Right ventricle myocardium superior (tissue), 1 donor: ENCODE measurements at regions of chrX and their contacts with region 1.

Region 1: GRCh38 chrX:24259544-24260240 is 54.2 kb downstream of the SUPT20HL2 start:
- DNase-seq: no peak
- ATAC-seq: no peak

Region 2: DNA sequence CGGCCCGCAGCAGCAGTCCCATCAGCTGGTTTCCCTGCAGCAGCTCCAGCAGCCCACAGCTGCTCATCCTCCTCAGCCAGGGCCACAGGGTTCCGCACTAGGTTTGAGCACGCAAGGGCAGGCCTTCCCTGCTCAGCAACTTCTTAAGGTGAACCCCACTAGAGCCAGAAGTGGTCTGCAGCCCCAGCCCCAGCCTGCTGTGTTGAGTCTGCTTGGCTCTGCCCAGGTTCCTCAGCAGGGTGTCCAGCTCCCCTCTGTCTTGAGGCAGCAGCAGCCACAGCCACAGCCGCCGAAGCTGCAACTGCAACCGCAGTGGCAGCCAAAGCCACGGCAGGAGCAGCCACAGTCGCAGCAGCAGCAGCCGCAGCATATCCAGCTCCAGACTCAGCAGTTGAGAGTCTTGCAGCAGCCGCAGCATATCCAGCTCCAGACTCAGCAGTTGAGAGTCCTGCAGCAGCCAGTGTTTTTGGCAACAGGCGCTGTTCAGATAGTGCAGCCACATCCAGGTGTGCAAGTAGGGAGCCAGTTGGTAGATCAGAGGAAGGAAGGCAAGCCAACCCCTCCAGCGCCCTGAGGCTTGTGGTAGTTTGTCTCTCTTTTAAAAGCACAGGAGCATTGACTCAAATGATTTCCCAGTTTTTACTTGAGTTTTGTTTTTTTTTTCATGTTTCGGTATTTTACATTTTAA is 105.3 kb after region 1 on chrX:
- intact Hi-C with region 1: loop called (anchors 10 kb)
- DNase-seq: no peak
- ATAC-seq: no peak